ENCODE measurements at regions of chr4 and their contacts with region 1.

Region 1: DNA sequence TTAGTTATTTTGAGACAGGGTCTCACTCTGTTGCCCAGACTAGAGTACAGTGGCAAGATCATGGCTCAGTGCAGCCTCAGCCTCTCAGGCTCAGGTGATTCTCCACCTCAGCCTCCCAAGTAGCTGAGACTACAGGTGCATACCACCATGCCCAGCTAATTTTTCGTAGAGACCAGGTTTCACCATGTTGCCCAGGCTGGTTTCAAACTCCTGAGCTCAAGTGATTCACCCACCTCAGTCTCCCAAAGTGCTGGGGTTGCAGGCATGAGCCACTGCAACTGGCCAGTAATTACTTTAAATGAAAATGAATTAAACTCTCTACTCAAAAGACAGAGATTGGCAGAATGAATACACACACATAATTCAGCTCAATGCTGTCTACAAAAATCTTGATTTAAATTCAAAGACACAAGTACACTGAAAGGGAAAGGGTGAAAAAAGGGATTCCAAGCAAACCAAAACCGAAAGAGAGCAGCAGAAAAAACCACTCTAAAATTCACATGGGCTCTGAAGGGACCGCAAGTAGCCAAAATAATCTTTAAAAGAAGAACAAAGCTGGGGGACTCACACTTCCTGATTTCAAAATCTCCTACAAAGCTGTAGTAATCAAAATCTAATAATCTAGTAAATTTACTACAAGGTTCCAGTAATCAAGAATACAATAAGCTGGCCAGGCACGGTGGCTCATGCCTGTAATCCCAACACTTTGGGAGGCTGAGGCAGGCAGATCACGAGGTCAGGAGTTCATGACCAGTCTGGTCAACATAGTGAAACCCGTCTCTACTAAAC is 11.8 kb upstream of the SPON2 start:
- DNase-seq: no peak
- H3K4me3 ChIP-seq: no peak overlapping the region
- H3K27ac ChIP-seq: no peak overlapping the region
- H3K4me1 ChIP-seq: no peaks in the 10 kb centered on the region
- H3K27me3 ChIP-seq: no peaks in the 10 kb centered on the region; the same call in 1 of the 2 replicates
- CTCF ChIP-seq: no peak

Region 2: GRCh38 chr4:1167247-1167949 is 16.8 kb before region 1 on chr4:
- CTCF ChIA-PET with region 1: interaction called, 11 read pairs
- POLR2A ChIA-PET with region 1: no interaction called
- intact Hi-C with region 1: no loop called
- DNase-seq: peak; percentile 64 to 77
- H3K4me3 ChIP-seq: peak overlapping the region; percentile 54; the same call in 1 of the 2 replicates
- H3K27ac ChIP-seq: no peak overlapping the region
- H3K4me1 ChIP-seq: no peaks in the 10 kb centered on the region
- H3K27me3 ChIP-seq: peaks cover 7% of the 10 kb centered on the region
- CTCF ChIP-seq: peak; percentile 83